ENCODE measurements at regions of chr2 and their contacts with region 1.

Region 1: DNA sequence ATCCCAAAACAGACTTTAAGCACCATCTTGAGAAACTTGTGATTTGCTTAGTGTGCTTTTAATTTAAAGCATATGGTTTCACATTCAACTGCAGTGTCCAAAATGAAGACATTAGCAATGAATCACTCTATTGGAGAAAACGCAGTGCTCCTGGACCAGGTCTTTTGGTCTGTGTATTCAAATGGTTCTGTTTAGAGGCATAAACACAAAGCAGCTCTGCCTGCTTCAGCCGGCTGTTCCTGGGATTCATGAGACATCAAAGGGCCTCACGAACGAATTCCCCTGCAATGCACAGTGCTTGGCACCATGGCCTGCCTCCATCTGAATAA is 117.1 kb upstream of the SP5 start:
- DNase-seq: no peak
- H3K4me3 ChIP-seq: no peak overlapping the region
- H3K27ac ChIP-seq: no peak overlapping the region
- H3K4me1 ChIP-seq: no peaks in the 10 kb centered on the region
- H3K27me3 ChIP-seq: no peaks in the 10 kb centered on the region
- CTCF ChIP-seq: no peak
- POLR2A ChIP-seq: no peak

Region 2: DNA sequence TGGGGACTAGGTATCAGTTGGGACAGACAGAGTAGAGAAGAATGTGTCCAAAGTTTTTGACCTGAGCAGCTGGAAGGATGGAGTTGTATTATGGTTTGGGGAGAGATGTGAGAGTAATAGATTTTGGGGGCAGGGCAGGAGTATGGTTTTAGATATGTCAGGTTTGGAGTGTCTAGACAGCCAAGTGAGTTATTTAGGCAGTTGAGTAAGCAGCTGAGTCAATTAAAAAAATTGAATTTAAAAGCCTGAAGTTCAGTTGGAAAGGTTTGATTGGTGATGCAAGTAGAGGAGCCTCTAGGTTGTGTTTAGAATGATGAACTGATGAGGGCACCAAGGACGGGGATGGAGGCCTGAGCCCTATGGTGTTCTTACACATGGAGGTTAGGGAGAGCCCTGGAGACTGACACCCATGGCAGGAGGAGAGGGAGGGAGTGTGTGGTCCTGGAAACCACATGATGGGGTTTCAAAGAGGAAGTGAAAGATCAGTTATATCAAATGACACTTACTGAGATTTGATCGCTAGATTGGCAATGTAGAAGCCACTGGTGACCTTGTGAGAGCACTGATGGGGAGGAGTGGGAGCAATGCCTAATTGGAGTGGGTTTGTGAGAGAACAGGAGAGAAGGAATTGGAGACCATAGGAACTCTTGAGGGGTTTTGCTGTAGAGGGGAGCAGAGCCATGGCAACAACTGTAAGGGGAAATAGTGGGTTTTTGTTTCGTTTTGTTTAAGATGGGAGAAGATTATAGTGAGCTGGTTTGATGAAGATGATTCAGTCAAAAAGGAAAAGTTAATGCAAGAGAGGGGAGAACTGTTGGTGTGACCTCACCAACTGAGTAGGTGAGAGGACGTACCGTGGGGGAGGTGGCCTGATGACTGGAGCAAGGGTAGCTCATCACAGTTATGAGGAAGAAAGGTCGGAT is 1839.6 kb after region 1 on chr2:
- intact Hi-C with region 1: loop called in 1 of 2 experiments (anchors 10 kb)
- DNase-seq: no peak
- H3K4me3 ChIP-seq: no peak overlapping the region
- H3K27ac ChIP-seq: no peak overlapping the region
- H3K4me1 ChIP-seq: peaks cover 0 to 20% of the 10 kb centered on the region in 2 donors
- H3K27me3 ChIP-seq: no peaks in the 10 kb centered on the region
- CTCF ChIP-seq: no peak
- POLR2A ChIP-seq: no peak